IMR-90 (cell line): ENCODE measurements at regions of chr5 and their contacts with region 1.

Region 1: GRCh38 chr5:64869419-64869818 is 100.7 kb downstream of the CWC27 start:
- DNase-seq: peak; percentile 88
- ATAC-seq: peak; percentile 95
- H3K4me3 ChIP-seq: no peak overlapping the region
- H3K27ac ChIP-seq: no peak overlapping the region
- H3K4me1 ChIP-seq: peaks cover 4% of the 10 kb centered on the region
- H3K27me3 ChIP-seq: no peaks in the 10 kb centered on the region
- CTCF ChIP-seq: no peak
- POLR2A ChIP-seq: no peak
- RAD21 ChIP-seq: no peak

Region 2: DNA sequence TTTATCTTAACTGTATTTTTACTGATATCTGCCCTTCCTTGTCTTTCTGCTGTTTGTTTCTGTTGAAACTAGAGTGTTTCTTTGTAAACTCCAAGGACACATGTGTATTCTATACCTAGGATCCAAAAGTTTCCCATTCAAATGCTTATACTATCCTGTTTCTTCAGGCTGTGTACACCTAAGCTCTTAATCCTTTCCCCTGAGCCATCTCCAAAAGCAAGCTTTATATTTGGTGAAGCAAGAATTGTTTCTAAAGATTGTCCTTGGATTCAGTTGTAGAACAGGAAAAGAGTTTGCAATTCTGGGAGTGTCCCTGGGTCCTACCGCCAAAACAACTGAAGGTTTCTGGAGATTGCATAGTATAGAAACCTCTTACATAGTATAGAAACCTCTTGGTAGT is 34.8 kb before region 1 on chr5:
- CTCF ChIA-PET with region 1: no interaction called
- POLR2A ChIA-PET with region 1: no interaction called
- dilution Hi-C with region 1: no loop called
- in situ Hi-C with region 1: no loop called
- intact Hi-C with region 1: loop called (anchors 5 kb)
- DNase-seq: no peak
- ATAC-seq: no peak
- H3K4me3 ChIP-seq: no peak overlapping the region
- H3K27ac ChIP-seq: no peak overlapping the region
- H3K4me1 ChIP-seq: no peaks in the 10 kb centered on the region
- H3K27me3 ChIP-seq: no peaks in the 10 kb centered on the region
- CTCF ChIP-seq: no peak
- POLR2A ChIP-seq: no peak
- RAD21 ChIP-seq: no peak

Region 3: GRCh38 chr5:64923151-64923685 is 53.8 kb after region 1 on chr5:
- CTCF ChIA-PET with region 1: no interaction called
- POLR2A ChIA-PET with region 1: no interaction called
- dilution Hi-C with region 1: no loop called
- in situ Hi-C with region 1: no loop called
- intact Hi-C with region 1: loop called (anchors 10 kb)
- DNase-seq: peak; percentile 84
- ATAC-seq: peak; percentile 95
- H3K4me3 ChIP-seq: no peak overlapping the region
- H3K27ac ChIP-seq: no peak overlapping the region
- H3K4me1 ChIP-seq: peaks cover 8% of the 10 kb centered on the region
- H3K27me3 ChIP-seq: no peaks in the 10 kb centered on the region
- CTCF ChIP-seq: no peak
- POLR2A ChIP-seq: no peak
- RAD21 ChIP-seq: no peak